SK-N-SH (cell line): ENCODE measurements at regions of chr12 and their contacts with region 1.

Region 1: DNA sequence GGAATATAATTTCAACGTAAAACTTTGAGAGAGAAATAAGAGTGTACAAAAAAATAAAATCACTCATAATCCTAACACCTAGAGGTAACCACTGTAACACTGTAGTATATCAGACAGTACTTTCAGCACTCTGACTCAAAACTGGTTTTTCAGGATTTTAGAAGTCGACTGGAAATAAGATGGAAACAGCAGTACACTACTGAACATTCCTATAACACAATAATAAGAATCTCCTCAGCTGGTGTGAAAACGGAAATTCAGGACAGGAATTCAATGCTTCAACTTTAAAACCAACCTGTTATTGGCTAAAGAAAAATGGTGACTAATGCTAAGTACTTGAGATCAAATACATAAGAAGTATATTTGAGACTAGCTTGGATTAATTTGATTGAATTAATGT is 12.3 kb upstream of the PITPNM2 start:
- DNase-seq: no peak
- H3K4me3 ChIP-seq: no peak overlapping the region
- H3K27ac ChIP-seq: no peak overlapping the region
- H3K4me1 ChIP-seq: no peaks in the 10 kb centered on the region
- H3K27me3 ChIP-seq: no peaks in the 10 kb centered on the region
- CTCF ChIP-seq: no peak
- EP300 ChIP-seq: no peak
- RAD21 ChIP-seq: no peak

Region 2: GRCh38 chr12:123150744-123151456 is 12.3 kb before region 1 on chr12 and contains the start of gene PITPNM2:
- CTCF ChIA-PET with region 1: interaction called, 15 read pairs
- POLR2A ChIA-PET with region 1: interaction called, 3 read pairs
- DNase-seq: peak; percentile 90
- H3K4me3 ChIP-seq: peak within 1 kb of the TSS; percentile 72 to 82
- H3K27ac ChIP-seq: peak within 1 kb of the TSS in 1 of 2 experiments; percentile 55; a peak in 2 of 4 replicates
- H3K4me1 ChIP-seq: peaks cover 0 to 19% of the 10 kb centered on the region in 2 experiments; a peak in 1 of 4 replicates
- H3K27me3 ChIP-seq: no peaks in the 10 kb centered on the region
- CTCF ChIP-seq: no peak; the same call in 1 of the 2 replicates
- EP300 ChIP-seq: no peak
- RAD21 ChIP-seq: no peak
- polyA plus RNA-seq, gene PITPNM2: 2.6 and 3.7 TPM in 2 replicates

Region 3: GRCh38 chr12:123200414-123200813 is 37.2 kb after region 1 on chr12:
- CTCF ChIA-PET with region 1: no interaction called
- POLR2A ChIA-PET with region 1: no interaction called
- DNase-seq: no peak
- H3K4me3 ChIP-seq: no peak overlapping the region
- H3K27ac ChIP-seq: no peak overlapping the region
- H3K4me1 ChIP-seq: no peaks in the 10 kb centered on the region
- H3K27me3 ChIP-seq: no peaks in the 10 kb centered on the region
- CTCF ChIP-seq: no peak
- EP300 ChIP-seq: no peak
- RAD21 ChIP-seq: no peak